Left cardiac atrium (tissue), 4 donors: ENCODE measurements at regions of chr14 and their contacts with region 1.

Region 1: GRCh38 chr14:94485944-94486841 is 10.2 kb upstream of the SERPINA9 start:
- DNase-seq: peak; percentile 53
- ATAC-seq: peak; percentile 77 to 87

Region 2: DNA sequence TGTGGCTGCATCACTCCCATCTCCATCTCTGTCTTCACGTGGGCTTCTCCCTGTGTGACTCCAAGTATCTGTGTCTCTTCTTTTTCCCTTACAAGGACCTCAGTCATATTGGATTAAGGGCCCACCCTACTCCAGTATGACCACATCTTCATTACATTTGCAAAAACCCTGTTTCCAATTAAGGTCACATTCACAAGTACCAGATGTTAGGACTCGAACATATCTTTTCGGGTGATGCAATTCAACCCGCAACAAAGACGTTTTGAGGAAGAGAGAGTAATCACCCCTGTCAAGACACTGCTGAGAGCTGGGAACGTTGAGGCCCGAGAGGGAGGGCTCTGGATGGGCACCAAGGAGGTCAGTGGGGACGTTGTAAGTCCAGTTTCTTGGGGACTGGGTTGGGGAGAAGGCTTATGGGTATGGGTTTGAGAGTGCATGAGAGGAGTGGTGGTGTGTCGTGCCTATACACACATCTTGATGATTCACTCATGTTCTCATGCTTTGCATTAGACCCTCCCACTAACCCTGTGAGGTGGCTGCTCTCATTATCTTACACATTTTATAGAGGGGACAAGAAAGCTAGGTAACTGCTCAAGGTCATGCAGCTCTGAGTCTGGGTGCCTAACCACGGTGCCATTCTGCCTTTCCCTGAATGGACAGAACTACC is 387.7 kb before region 1 on chr14:
- intact Hi-C with region 1: no loop called
- DNase-seq: no peak
- ATAC-seq: no peak

Region 3: GRCh38 chr14:94355191-94355797 is 130.9 kb before region 1 on chr14:
- intact Hi-C with region 1: loop called in 1 of 2 experiments (anchors 10 kb)
- DNase-seq: peak; percentile 37
- ATAC-seq: peak in 1 of 2 donors; percentile 47